H1 (cell line): ENCODE measurements at regions of chr3 and their contacts with region 1.

Region 1: DNA sequence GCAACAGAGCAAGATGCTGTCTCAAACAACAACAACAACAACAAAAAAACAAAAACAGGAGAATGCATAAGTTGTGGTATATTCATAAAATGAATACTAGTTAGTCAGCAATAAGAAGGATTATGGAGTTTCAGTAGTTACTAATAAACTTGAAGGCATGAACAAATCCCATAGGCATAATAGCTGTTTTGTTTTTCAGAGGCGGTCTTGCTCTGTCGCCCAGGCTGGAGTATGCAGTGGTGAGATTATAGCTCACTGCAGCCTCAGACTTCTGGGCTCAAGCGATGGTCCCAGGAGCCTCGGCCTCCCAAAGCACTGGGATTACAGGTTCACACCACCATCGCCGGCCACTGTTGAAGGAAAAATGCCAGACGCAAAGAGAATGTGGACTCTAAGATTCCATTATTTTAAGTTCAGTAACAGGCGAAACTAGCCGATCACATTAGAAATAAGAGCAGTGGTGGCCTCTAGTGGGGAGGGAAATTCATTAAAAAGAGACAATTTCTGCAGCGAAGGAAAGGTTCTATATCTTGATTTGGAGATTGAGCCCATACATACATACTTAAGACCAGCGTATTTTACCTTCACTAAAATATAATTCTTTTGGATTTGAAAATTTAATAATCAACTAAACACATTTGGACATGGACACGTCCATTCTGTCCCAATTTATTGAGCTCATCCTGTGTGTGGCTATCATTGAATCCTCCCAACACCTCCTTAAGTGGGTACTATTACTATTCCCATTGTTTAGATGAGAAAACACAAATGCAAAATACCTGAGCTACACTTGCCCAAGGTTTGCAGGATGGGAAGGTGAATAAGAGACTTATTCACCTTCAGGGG is 27.4 kb upstream of the HDAC11 start:
- DNase-seq: no peak
- H3K4me3 ChIP-seq: peak overlapping the region in 1 of 4 experiments; percentile 57; a peak in 2 of 8 replicates
- H3K27ac ChIP-seq: no peak overlapping the region
- H3K4me1 ChIP-seq: peaks cover 2 to 5% (median 4%) of the 10 kb centered on the region in 4 experiments; a peak in 5 of 7 replicates
- H3K27me3 ChIP-seq: no peaks in the 10 kb centered on the region
- CTCF ChIP-seq: peak in 2 of 3 experiments; percentile 43 to 48; a peak in 2 of 4 replicates
- EP300 ChIP-seq: no peak
- POLR2A ChIP-seq: no peak
- RAD21 ChIP-seq: peak; percentile 65 to 68

Region 2: DNA sequence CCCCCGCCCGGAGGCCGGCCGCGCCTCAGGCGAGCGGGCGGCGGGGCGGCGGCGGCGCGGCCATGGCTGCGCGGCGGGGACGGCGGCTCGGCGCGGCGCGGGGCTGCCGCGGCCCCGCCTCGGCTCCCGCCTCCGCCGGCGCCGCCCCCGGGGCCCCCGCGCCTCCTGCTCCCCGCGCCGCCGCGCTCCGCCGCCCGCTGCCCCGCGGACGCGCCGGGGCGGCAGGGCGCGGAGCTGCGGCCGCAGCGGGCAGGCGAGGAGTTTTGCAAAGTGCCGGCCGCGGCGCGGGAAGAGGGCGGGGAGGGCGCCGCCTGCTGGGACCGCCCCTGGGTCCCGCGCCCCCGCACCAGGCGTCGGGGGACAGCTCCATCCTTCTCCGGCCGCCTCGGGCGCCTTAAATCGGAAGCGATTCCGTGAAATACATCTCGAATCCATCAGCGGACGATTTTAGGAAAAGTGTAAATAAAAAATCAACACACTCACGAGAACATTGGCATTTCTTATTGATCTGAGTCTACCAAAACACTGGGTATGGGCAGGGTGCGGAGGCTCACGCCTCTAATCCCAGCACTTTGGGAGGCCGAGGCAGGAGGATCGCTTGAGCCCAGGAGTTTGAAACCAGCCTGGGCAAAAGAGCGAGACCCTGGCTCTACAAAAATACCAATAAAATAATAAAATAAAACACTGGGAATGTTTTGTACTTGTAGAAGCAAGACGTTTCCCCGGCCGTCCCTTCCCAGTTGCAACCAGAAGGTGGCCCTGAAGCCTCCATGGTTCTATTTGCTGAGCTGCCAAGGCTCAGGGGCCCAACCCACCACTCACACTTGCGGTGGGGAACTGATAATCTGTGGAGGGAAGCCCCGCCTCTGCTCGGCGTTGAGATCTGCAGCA is 169.5 kb before region 1 on chr3:
- CTCF ChIA-PET with region 1: interaction called, 18 read pairs
- POLR2A ChIA-PET with region 1: no interaction called
- DNase-seq: peak in 1 of 2 experiments; percentile 74
- H3K4me3 ChIP-seq: peak overlapping the region; percentile 18 to 67 (median 35)
- H3K27ac ChIP-seq: no peak overlapping the region
- H3K4me1 ChIP-seq: peaks cover 0 to 11% (median 6%) of the 10 kb centered on the region in 4 experiments; a peak in 5 of 7 replicates
- H3K27me3 ChIP-seq: peaks cover 7 to 26% (median 19%) of the 10 kb centered on the region in 4 experiments
- CTCF ChIP-seq: peak in 2 of 3 experiments; percentile 62 to 65; a peak in 3 of 4 replicates
- EP300 ChIP-seq: no peak
- POLR2A ChIP-seq: no peak
- RAD21 ChIP-seq: peak; percentile 56 to 69

Region 3: GRCh38 chr3:13364602-13365271 is 88.0 kb before region 1 on chr3:
- CTCF ChIA-PET with region 1: interaction called, 14 read pairs
- POLR2A ChIA-PET with region 1: no interaction called
- DNase-seq: no peak
- H3K4me3 ChIP-seq: no peak overlapping the region
- H3K27ac ChIP-seq: peak overlapping the region; percentile 63; the same call in 1 of the 2 replicates
- H3K4me1 ChIP-seq: peaks cover 8 to 16% (median 14%) of the 10 kb centered on the region in 4 experiments
- H3K27me3 ChIP-seq: no peaks in the 10 kb centered on the region; a peak in 1 of 7 replicates
- CTCF ChIP-seq: peak in 1 of 3 experiments; percentile 14; a peak in 1 of 4 replicates
- EP300 ChIP-seq: no peak
- POLR2A ChIP-seq: no peak
- RAD21 ChIP-seq: peak in 1 of 2 experiments; percentile 16; a peak in 1 of 4 replicates

Region 4: DNA sequence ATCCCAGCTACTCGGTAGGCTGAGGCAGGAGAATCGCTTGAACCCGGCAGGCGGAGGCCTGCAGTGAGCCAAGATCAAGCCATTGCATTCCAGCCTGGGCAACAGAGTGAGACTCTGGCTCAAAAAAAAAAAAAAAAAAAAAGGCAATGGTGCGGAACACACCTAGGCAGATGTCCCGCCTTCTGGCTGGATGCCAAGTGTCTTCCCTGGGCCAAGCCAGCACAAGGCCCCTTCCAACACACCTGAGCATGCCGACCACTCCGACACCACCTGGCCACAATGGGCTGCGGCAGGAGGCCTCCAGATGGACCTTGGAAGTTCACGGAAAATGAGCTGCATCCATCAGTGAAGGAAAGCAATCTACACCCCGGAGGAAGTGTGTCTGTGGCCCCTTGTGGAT is 51.6 kb before region 1 on chr3:
- CTCF ChIA-PET with region 1: interaction called, 13 read pairs
- POLR2A ChIA-PET with region 1: no interaction called
- DNase-seq: no peak
- H3K4me3 ChIP-seq: no peak overlapping the region
- H3K27ac ChIP-seq: no peak overlapping the region
- H3K4me1 ChIP-seq: peaks cover 0 to 3% (median 0%) of the 10 kb centered on the region in 4 experiments; a peak in 1 of 7 replicates
- H3K27me3 ChIP-seq: no peaks in the 10 kb centered on the region
- CTCF ChIP-seq: no peak
- EP300 ChIP-seq: no peak
- POLR2A ChIP-seq: no peak
- RAD21 ChIP-seq: no peak

Region 5: DNA sequence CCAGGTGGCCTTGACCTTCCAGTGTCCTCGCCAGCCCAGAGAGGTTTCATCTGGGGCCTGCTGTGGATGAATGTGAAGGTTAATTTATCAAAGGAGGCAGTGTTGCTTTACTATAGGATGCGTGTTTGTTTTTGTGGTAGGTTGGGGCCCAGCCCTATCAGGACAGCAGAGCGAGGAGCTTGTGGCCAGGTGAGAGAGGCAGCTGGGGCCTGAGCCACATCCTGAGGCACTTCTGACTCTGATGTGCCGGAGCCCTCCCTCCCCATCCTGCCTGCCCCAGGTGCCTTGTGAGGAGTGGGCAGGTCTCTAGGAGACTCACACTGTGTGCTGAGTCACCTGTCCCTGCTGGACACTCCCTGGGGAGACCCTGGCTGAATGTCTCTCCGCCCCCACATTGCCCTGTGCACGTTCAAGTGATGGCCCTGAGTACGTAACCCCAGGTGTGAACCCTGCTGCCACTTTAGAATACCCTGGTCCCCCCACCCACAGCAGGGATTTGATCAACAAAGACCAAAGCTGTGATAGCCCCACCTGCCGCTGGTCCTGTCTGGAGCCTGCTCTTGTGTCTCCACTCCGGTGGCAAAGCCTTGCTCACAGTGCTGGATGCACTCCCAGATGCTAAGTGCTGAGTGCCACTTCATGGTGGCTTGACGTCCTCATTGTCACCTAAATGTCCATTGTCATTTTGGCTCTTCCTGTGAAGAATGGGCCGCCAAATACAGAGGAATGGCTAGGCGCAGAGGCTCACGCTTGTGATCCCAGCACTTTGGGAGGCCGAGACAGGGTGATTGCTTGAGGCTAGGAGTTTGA is 112.2 kb after region 1 on chr3:
- CTCF ChIA-PET with region 1: no interaction called
- POLR2A ChIA-PET with region 1: no interaction called
- DNase-seq: no peak
- H3K4me3 ChIP-seq: no peak overlapping the region
- H3K27ac ChIP-seq: no peak overlapping the region
- H3K4me1 ChIP-seq: peaks cover 0 to 7% (median 2%) of the 10 kb centered on the region in 4 experiments; a peak in 3 of 7 replicates
- H3K27me3 ChIP-seq: no peaks in the 10 kb centered on the region; a peak in 1 of 7 replicates
- CTCF ChIP-seq: no peak
- EP300 ChIP-seq: no peak
- POLR2A ChIP-seq: no peak
- RAD21 ChIP-seq: no peak

Region 6: GRCh38 chr3:14651440-14652251 is 1198.9 kb after region 1 on chr3 and contains the start of gene CCDC174:
- CTCF ChIA-PET with region 1: no interaction called
- POLR2A ChIA-PET with region 1: no interaction called
- DNase-seq: peak; percentile 84 to 96
- H3K4me3 ChIP-seq: peak within 1 kb of the TSS; percentile 88 to 99 (median 93)
- H3K27ac ChIP-seq: peak within 1 kb of the TSS; percentile 89
- H3K4me1 ChIP-seq: no peaks in the 10 kb centered on the region; a peak in 1 of 7 replicates
- H3K27me3 ChIP-seq: no peaks in the 10 kb centered on the region; a peak in 1 of 7 replicates
- CTCF ChIP-seq: no peak
- EP300 ChIP-seq: no peak
- POLR2A ChIP-seq: peak; percentile 58 to 94
- RAD21 ChIP-seq: no peak
- total RNA-seq, gene CCDC174: 11.9 and 14.1 TPM in 2 replicates